Aorta (tissue), 5 donors: ENCODE measurements at regions of chr16 and their contacts with region 1.

Region 1: GRCh38 chr16:87387942-87388817 is 4.0 kb upstream of the MAP1LC3B start:
- DNase-seq: peak; percentile 93 to 95
- ATAC-seq: peak; percentile 84
- H3K4me3 ChIP-seq: peak overlapping the region in 1 of 2 donors; percentile 13
- H3K27ac ChIP-seq: peak overlapping the region; percentile 50 to 97
- H3K4me1 ChIP-seq: peaks cover 0 to 4% of the 10 kb centered on the region in 2 donors
- H3K27me3 ChIP-seq: peaks cover 0 to 2% of the 10 kb centered on the region in 2 donors

Region 2: DNA sequence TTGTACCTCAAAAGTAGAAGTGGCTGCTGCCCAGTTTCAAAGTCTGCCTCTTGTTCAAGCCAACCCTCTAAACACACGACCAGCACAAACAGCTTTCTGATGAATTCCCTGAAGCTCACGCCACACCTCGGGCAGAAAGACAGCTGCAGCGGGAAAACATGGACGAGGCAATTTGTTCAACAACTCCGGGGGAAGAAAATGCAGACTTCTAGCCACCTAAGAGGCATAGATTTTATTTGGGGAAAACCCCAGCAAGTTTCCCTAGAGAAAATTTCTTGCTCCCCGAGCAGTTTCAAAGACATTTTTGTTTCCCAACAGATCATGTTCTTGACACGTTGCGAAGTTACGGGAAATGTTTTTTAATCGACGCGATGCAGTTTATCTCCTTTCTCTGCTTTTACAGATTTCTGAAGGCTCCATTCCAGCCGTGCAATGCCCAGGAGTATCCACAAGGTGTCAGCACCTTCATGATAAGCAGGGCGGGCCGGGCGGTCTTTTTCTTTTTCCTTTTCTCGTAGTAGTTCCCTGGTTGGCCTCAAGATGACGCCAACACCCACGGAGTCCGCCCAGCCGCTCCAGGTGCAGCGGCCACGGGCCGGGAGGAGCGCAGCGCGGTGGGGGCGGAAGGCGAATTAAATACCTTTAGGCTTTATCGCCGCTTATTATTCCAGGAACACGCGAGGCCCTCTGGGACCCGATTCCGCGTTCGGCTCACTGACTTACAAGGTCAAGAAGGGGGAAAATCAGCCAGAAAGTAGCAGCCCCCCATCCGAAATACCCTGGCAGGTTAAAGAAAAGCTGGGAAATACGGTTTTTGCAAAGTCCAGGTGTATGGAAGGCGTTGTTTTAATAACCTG is 824.5 kb before region 1 on chr16:
- intact Hi-C with region 1: loop called (anchors 5 to 10 kb)
- DNase-seq: peak; percentile 93 to 95
- ATAC-seq: peak; percentile 92
- H3K4me3 ChIP-seq: peak overlapping the region; percentile 3 to 41
- H3K27ac ChIP-seq: peak overlapping the region; percentile 91 to 94
- H3K4me1 ChIP-seq: no peaks in the 10 kb centered on the region
- H3K27me3 ChIP-seq: no peaks in the 10 kb centered on the region

Region 3: DNA sequence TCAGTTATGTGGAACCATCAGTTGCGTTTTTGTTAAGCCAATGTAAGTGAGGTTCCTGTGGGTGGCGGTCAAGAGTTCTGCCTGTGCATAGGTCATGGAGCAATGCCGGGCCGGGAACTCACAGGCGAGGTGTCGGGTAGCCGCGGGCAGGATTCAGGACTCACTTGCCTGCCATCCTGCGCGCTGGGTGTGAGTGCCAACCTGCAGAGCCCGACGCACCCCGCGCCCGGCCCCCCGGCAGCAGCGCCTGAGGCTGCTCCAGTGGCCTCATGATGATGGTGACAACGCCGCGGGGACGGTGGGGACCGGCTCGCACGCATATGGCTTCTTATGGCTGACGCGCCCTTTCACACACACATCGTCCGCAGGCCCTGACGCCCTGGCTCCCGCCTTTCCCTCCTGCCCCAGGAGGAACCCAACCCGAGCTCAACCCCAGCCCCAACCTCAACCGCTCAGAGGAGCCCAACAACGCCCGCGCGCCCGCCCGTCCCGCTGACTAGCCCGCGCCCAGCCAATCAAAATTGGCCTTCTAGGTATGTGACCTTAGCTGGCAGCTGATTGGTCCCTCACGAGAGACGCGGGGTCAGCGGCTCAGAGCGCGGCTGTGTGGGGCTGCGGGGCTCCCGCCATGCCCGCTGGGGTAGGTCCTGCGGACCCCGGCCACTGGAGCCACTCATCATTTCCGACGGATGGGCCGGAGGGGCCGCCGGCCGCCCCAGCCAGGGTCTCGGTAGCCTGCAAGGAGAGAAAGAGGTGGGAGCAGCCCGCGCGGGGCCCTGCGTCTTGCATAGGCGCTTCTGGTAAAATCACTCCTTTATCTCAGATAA is 71.0 kb before region 1 on chr16 and contains the start of gene C16orf95:
- intact Hi-C with region 1: loop called (anchors 5 kb)
- DNase-seq: peak; percentile 97 to 98
- ATAC-seq: peak; percentile 98
- H3K4me3 ChIP-seq: peak within 1 kb of the TSS; percentile 88 to 91
- H3K27ac ChIP-seq: peak within 1 kb of the TSS in 1 of 2 donors; percentile 85
- H3K4me1 ChIP-seq: peaks cover 0 to 4% of the 10 kb centered on the region in 2 donors
- H3K27me3 ChIP-seq: no peaks in the 10 kb centered on the region
- total RNA-seq, gene C16orf95: 2.2 to 3.5 TPM

Region 4: DNA sequence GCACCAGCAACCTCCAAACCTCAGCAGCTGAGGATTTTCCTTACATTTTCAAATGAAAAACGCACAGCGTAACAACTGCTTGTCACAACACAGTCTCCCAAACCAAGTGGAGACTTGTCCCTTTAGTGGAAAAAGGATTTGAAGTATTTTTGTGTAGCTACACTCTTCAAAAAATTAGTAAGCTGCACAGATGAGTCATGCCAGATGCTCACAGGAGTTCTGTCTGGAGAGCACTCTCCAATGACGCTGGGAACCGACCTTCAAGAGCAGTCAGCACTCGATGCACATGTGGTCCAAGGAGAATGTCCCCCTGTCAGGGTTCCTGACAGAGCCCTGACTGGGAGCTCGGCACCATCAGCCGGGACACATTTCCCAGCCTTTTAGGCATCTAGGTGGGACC is 43.7 kb after region 1 on chr16:
- intact Hi-C with region 1: no loop called
- DNase-seq: no peak
- ATAC-seq: no peak
- H3K4me3 ChIP-seq: no peak overlapping the region
- H3K27ac ChIP-seq: no peak overlapping the region
- H3K4me1 ChIP-seq: no peaks in the 10 kb centered on the region
- H3K27me3 ChIP-seq: no peaks in the 10 kb centered on the region

Region 5: GRCh38 chr16:87540945-87541877 is 153.0 kb after region 1 on chr16:
- intact Hi-C with region 1: loop called (anchors 5 to 10 kb)
- DNase-seq: peak; percentile 86 to 91
- ATAC-seq: peak; percentile 80
- H3K4me3 ChIP-seq: peak overlapping the region in 1 of 2 donors; percentile 2
- H3K27ac ChIP-seq: peak overlapping the region; percentile 18 to 97
- H3K4me1 ChIP-seq: no peaks in the 10 kb centered on the region
- H3K27me3 ChIP-seq: no peaks in the 10 kb centered on the region

Region 6: DNA sequence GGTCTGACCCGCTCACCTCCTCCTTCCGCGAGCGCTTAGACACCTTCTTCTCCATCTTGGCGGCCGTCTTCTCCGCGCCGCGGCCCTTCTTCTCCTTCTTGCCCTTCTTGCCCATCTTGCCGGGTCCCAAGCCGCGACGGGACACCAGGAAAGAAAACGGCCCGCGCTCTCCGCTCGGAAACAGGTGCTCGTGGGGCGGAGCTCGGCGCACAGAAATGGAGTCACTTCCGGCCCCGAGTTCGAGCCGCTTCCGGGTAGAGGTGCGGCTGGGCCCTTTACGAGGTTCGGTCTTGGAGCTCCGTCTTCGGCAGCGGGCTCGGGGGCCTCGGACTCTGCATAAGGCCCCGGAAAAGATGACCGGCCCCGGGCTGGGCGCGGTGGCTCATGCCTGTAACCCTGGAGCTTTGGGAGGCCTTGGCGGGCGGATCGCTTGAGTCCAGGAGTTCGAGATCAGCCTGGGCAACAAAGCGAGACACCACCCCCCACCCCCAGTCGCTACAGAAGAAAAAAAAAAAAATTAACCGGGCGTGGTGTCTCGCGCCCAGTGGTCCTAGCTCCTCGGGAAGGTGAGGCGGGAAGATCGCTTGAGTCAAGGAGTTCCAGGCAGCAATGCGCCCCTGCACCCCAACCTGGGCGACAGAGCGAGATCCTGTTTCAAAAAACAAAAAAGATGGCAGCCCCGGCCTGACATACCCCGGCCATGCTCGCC is 377.8 kb after region 1 on chr16 and contains the start of gene KLHDC4:
- intact Hi-C with region 1: loop called in 1 of 2 experiments (anchors 10 kb)
- DNase-seq: peak; percentile 93 to 96
- ATAC-seq: peak; percentile 91
- H3K4me3 ChIP-seq: peak within 1 kb of the TSS; percentile 58 to 76
- H3K27ac ChIP-seq: peak within 1 kb of the TSS in 1 of 2 donors; percentile 80
- H3K4me1 ChIP-seq: no peaks in the 10 kb centered on the region
- H3K27me3 ChIP-seq: no peaks in the 10 kb centered on the region
- total RNA-seq, gene KLHDC4: 33.3 to 39.0 TPM